SK-N-SH (cell line): ENCODE measurements at regions of chr1 and their contacts with region 1.

Region 1: DNA sequence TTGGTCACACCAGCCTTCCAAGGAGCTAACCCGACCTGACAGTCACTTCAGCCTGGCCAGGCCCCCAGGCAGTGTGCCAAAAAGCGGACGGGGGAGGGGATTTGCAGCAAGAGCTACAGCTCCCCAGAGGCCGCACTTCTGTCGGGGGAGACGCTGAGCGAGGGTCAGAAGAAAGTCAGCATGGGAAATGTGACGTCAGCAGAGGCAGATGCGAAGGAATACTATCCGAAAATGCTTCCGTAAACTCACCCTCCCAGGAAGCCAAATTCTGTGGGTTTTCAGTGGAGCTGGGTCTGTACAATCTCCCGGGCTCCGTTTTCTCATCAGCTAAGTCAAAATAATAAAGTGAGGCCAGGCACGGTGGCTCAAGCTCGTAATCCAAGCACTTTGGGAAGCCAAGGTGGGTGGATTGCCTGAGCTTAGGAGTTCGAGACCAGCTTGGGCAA is 28.5 kb upstream of the ECE1 start:
- DNase-seq: no peak
- H3K4me3 ChIP-seq: no peak overlapping the region
- H3K27ac ChIP-seq: peak overlapping the region in 1 of 2 experiments; percentile 56; a peak in 2 of 4 replicates
- H3K4me1 ChIP-seq: peaks cover 16 to 70% of the 10 kb centered on the region in 2 experiments; a peak in 3 of 4 replicates
- H3K27me3 ChIP-seq: no peaks in the 10 kb centered on the region
- CTCF ChIP-seq: no peak
- EP300 ChIP-seq: peak in 1 of 2 experiments; percentile 13; a peak in 1 of 4 replicates
- RAD21 ChIP-seq: no peak

Region 2: DNA sequence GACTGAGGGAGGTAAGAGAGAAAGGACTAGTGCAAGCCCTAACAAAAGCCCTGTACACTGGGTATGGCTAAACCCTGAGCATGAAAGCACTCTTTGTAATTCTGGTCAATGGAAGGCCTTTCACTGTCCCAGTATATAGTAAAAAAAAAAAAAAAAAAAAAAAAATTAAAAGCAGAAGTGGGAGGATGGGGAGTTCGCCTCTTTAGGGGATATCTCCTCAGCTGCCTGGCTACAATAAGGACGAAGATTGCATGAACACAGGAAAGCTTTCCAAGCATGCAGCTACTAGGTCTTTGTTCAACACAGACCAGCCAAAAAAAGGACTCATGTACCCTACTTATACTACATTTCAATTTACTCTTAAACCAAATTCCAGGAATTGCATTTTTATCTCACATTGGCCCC is 201.1 kb before region 1 on chr1:
- CTCF ChIA-PET with region 1: no interaction called
- POLR2A ChIA-PET with region 1: no interaction called
- DNase-seq: no peak
- H3K4me3 ChIP-seq: no peak overlapping the region
- H3K27ac ChIP-seq: no peak overlapping the region
- H3K4me1 ChIP-seq: no peaks in the 10 kb centered on the region; a peak in 1 of 4 replicates
- H3K27me3 ChIP-seq: no peaks in the 10 kb centered on the region
- CTCF ChIP-seq: no peak
- EP300 ChIP-seq: no peak
- RAD21 ChIP-seq: no peak

Region 3: DNA sequence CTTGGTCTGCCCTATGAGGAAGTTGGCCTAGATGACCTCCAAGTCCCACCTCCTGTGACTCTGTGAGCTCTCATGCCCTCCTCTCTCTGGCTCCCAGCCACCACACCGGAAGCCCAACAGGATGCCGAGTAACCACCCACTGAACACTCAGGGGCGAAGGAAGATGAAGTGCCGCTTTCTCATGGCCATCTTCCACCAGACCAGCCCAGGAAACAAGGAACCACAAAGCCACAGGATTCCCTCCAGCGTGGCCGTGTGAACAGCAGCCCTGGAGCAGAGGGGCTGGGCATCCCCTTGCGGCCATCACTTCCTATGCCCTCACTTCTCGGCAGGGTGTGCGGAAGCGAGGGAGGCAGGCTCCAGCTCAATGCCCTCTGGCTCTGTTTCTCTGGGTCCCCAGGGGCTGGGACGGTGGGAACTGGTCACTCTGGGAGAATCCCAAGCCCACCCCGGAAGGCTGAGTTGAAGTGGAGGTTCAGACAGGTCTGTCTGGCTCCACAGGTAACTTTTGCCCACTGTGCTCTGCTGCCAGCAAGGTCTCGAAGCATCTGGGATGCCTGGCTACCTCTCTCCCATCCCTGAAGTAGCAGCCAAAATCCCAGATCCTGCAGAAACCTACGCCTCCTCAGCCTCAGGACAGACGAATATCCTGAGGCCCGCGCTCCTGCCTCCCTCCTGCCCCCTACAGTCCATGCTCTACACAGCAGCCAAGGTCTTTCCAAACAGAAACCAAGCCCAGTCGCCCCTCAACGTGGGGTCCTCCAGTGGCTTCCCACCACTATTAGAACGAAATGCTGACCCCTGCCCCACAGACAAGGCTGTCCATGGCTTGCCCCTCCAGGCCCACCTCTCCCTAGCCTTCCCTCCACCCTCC is 15.7 kb after region 1 on chr1:
- CTCF ChIA-PET with region 1: interaction called, 17 read pairs
- POLR2A ChIA-PET with region 1: interaction called, 3 read pairs
- DNase-seq: peak; percentile 59
- H3K4me3 ChIP-seq: peak overlapping the region in 1 of 2 experiments; percentile 23; a peak in 1 of 4 replicates
- H3K27ac ChIP-seq: peak overlapping the region; percentile 56 to 91; a peak in 3 of 4 replicates
- H3K4me1 ChIP-seq: peaks cover 26 to 64% of the 10 kb centered on the region in 2 experiments
- H3K27me3 ChIP-seq: no peaks in the 10 kb centered on the region
- CTCF ChIP-seq: peak; percentile 80
- EP300 ChIP-seq: no peak
- RAD21 ChIP-seq: peak; percentile 66